Tibial artery (tissue), 4 donors: ENCODE measurements at regions of chr9 and their contacts with region 1.

Region 1: GRCh38 chr9:85258823-85259370 is 482.9 kb downstream of the AGTPBP1 start:
- DNase-seq: peak; percentile 45 to 78
- H3K4me3 ChIP-seq: no peak overlapping the region
- H3K27ac ChIP-seq: no peak overlapping the region
- H3K4me1 ChIP-seq: peaks cover 0 to 3% (median 0%) of the 10 kb centered on the region in 4 donors
- H3K27me3 ChIP-seq: no peaks in the 10 kb centered on the region
- CTCF ChIP-seq: peak; percentile 76 to 78

Region 2: GRCh38 chr9:84397151-84397728 is 861.7 kb before region 1 on chr9:
- intact Hi-C with region 1: loop called (anchors 10 kb)
- DNase-seq: peak; percentile 57 to 73
- H3K4me3 ChIP-seq: no peak overlapping the region
- H3K27ac ChIP-seq: no peak overlapping the region
- H3K4me1 ChIP-seq: no peaks in the 10 kb centered on the region
- H3K27me3 ChIP-seq: peaks cover 0 to 19% of the 10 kb centered on the region in 2 donors
- CTCF ChIP-seq: peak; percentile 72 to 91

Region 3: DNA sequence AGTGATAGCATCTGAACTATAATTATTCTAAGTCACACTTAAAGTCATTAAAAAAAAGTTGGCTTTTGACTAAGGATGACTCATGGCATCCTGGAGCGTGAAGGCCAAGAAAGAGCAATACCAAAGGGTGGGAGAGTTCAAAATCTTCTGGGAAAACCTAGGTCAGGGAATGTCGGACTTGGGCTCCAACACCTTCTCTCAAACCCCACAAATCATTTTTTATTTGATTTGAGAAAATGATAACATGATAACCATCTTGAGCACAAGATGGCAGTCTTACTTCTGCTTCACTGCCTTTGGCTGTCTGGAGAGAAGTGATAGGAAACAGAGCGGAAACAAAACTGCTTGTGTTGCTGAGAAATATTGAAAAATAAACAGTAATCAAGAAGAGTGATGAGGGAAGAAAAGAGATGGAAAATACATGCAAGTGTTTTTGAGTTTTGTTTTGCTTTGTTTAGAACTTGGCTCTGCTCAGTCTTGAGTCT is 606.3 kb before region 1 on chr9:
- intact Hi-C with region 1: loop called (anchors 10 kb)
- DNase-seq: no peak
- H3K4me3 ChIP-seq: no peak overlapping the region
- H3K27ac ChIP-seq: no peak overlapping the region
- H3K4me1 ChIP-seq: no peaks in the 10 kb centered on the region
- H3K27me3 ChIP-seq: no peaks in the 10 kb centered on the region
- CTCF ChIP-seq: peak in 1 of 2 experiments; percentile 27

Region 4: GRCh38 chr9:85321561-85321960 is 62.7 kb after region 1 on chr9:
- intact Hi-C with region 1: no loop called
- DNase-seq: no peak
- H3K4me3 ChIP-seq: no peak overlapping the region
- H3K27ac ChIP-seq: no peak overlapping the region
- H3K4me1 ChIP-seq: no peaks in the 10 kb centered on the region
- H3K27me3 ChIP-seq: no peaks in the 10 kb centered on the region
- CTCF ChIP-seq: no peak